ENCODE measurements at regions of chr12 and their contacts with region 1.

Region 1: DNA sequence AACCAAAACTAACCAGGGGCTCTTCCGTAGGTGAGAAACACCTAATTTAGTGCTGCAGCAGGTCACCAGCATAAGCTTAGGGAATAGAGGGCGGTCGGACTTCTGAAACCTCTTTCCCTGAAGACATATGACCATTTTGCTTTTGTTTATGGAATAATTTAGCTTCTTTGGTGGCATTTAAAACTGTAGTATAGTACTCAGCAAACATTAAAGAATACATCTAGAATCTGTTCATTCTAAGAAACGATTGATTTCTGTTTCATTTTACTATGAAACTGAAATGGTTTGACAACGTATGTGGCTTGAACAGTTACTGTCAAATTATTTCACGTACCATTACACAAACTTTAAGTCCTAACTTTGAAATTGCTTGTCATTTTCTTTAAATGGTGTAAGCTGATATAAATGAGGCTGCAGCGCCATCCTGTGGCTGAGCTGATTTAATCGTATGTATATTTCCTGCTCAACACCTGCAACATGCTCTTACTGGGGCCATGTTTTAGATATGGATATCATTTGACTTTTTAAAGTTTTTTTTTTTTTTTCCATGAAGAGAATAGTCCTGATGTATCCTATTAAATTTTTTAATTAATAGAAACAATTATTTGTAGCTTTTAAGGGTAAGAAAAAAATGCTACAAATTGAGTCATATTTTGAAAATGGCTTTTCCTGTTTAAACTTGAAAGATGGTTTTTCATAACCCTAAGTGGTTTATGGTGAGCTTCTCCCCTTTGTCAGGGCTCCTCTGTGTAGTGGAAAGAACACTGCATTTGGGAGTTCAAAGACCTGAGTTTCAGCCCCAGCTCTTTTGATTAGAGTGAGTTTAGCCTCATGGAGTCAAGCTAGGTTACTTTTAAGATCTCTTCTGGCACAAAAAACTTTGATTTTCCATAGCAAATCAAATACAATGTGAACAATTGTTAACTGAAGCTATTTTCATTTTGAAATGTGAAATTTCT is 27.4 kb downstream of the CFAP54 start:
- DNase-seq: peak; percentile 94
- H3K4me3 Mint-ChIP-seq: peak overlapping the region; percentile 15
- H3K27ac Mint-ChIP-seq: peak overlapping the region; percentile 67
- H3K4me1 Mint-ChIP-seq: peaks cover 18% of the 10 kb centered on the region
- H3K27me3 Mint-ChIP-seq: no peaks in the 10 kb centered on the region

Region 2: GRCh38 chr12:95918194-95918993 is 598.4 kb before region 1 on chr12:
- CTCF ChIA-PET with region 1: interaction called, 14 read pairs
- DNase-seq: peak; percentile 65
- H3K4me3 Mint-ChIP-seq: no peak overlapping the region
- H3K27ac Mint-ChIP-seq: no peak overlapping the region
- H3K4me1 Mint-ChIP-seq: no peaks in the 10 kb centered on the region
- H3K27me3 Mint-ChIP-seq: peaks cover 14% of the 10 kb centered on the region

Region 3: GRCh38 chr12:96015672-96016071 is 501.1 kb before region 1 on chr12:
- CTCF ChIA-PET with region 1: no interaction called
- DNase-seq: no peak
- H3K4me3 Mint-ChIP-seq: no peak overlapping the region
- H3K27ac Mint-ChIP-seq: no peak overlapping the region
- H3K4me1 Mint-ChIP-seq: no peaks in the 10 kb centered on the region
- H3K27me3 Mint-ChIP-seq: no peaks in the 10 kb centered on the region

Region 4: GRCh38 chr12:96061864-96062453 is 454.8 kb before region 1 on chr12:
- CTCF ChIA-PET with region 1: interaction called, 29 read pairs
- DNase-seq: peak; percentile 86
- H3K4me3 Mint-ChIP-seq: no peak overlapping the region
- H3K27ac Mint-ChIP-seq: no peak overlapping the region
- H3K4me1 Mint-ChIP-seq: peaks cover 30% of the 10 kb centered on the region
- H3K27me3 Mint-ChIP-seq: no peaks in the 10 kb centered on the region

Region 5: GRCh38 chr12:96177013-96177412 is 339.7 kb before region 1 on chr12:
- CTCF ChIA-PET with region 1: no interaction called
- DNase-seq: peak; percentile 73
- H3K4me3 Mint-ChIP-seq: peak overlapping the region; percentile 1
- H3K27ac Mint-ChIP-seq: peak overlapping the region; percentile 95
- H3K4me1 Mint-ChIP-seq: peaks cover 36% of the 10 kb centered on the region
- H3K27me3 Mint-ChIP-seq: peaks cover 8% of the 10 kb centered on the region

Region 6: GRCh38 chr12:96215919-96216273 is 300.9 kb before region 1 on chr12:
- CTCF ChIA-PET with region 1: interaction called, 70 read pairs
- DNase-seq: no peak
- H3K4me3 Mint-ChIP-seq: no peak overlapping the region
- H3K27ac Mint-ChIP-seq: peak overlapping the region; percentile 70
- H3K4me1 Mint-ChIP-seq: peaks cover 50% of the 10 kb centered on the region
- H3K27me3 Mint-ChIP-seq: no peaks in the 10 kb centered on the region

Region 7: GRCh38 chr12:96419576-96420271 is 97.0 kb before region 1 on chr12:
- CTCF ChIA-PET with region 1: interaction called, 12 read pairs
- DNase-seq: no peak
- H3K4me3 Mint-ChIP-seq: no peak overlapping the region
- H3K27ac Mint-ChIP-seq: no peak overlapping the region
- H3K4me1 Mint-ChIP-seq: peaks cover 57% of the 10 kb centered on the region
- H3K27me3 Mint-ChIP-seq: peaks cover 4% of the 10 kb centered on the region

Region 8: GRCh38 chr12:96501139-96501761 is 15.5 kb before region 1 on chr12:
- CTCF ChIA-PET with region 1: interaction called, 15 read pairs
- DNase-seq: peak; percentile 53
- H3K4me3 Mint-ChIP-seq: no peak overlapping the region
- H3K27ac Mint-ChIP-seq: peak overlapping the region; percentile 81
- H3K4me1 Mint-ChIP-seq: peaks cover 61% of the 10 kb centered on the region
- H3K27me3 Mint-ChIP-seq: peaks cover 4% of the 10 kb centered on the region